Gastrocnemius medialis (tissue), 4 donors: ENCODE measurements at regions of chr5 and their contacts with region 1.

Region 1: GRCh38 chr5:176537608-176538504 is 654 bp upstream of the RNF44 start:
- DNase-seq: peak; percentile 100
- ATAC-seq: peak; percentile 85 to 87
- H3K4me3 ChIP-seq: peak overlapping the region; percentile 73 to 97 (median 90)
- H3K27ac ChIP-seq: peak overlapping the region; percentile 94 to 100 (median 97)
- H3K4me1 ChIP-seq: peaks cover 46 to 54% of the 10 kb centered on the region in 2 donors
- H3K27me3 ChIP-seq: no peaks in the 10 kb centered on the region
- CTCF ChIP-seq: peak in 1 of 5 experiments; percentile 8
- POLR2A ChIP-seq: peak in 1 of 2 donors; percentile 69

Region 2: DNA sequence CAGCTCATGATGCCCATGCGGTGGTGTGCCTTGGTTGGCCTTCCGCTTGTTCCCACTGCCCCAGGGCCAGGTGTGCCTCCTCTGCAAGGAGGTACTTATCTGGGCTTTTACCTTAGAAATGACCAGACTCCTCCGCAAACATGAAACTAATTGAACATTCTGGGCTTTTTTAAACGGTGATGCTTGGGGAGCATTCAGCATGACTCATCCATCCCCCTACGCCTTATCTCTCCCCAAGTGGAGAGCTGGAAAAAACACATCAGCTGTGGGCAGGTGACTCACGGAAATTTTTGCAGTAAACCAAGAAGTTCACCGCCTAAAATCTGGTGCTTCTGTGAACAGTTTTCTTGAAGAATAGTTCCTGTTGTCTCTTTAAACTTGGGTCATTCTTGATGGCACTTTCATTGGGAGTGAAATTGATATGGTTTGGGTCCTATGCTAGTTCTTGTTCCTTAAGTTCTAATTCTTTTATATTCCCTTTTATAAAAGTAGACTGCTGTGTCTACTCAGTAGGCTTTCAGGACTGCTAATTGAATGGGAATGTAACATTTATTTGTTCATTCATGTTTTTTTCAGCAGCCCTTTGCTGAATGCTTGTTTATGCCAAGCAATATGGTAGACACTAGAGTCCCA is 1019.9 kb before region 1 on chr5:
- in situ Hi-C with region 1: no loop called
- intact Hi-C with region 1: no loop called
- DNase-seq: no peak
- ATAC-seq: no peak
- H3K4me3 ChIP-seq: no peak overlapping the region
- H3K27ac ChIP-seq: no peak overlapping the region
- H3K4me1 ChIP-seq: no peaks in the 10 kb centered on the region
- H3K27me3 ChIP-seq: no peaks in the 10 kb centered on the region
- CTCF ChIP-seq: no peak
- POLR2A ChIP-seq: no peak

Region 3: DNA sequence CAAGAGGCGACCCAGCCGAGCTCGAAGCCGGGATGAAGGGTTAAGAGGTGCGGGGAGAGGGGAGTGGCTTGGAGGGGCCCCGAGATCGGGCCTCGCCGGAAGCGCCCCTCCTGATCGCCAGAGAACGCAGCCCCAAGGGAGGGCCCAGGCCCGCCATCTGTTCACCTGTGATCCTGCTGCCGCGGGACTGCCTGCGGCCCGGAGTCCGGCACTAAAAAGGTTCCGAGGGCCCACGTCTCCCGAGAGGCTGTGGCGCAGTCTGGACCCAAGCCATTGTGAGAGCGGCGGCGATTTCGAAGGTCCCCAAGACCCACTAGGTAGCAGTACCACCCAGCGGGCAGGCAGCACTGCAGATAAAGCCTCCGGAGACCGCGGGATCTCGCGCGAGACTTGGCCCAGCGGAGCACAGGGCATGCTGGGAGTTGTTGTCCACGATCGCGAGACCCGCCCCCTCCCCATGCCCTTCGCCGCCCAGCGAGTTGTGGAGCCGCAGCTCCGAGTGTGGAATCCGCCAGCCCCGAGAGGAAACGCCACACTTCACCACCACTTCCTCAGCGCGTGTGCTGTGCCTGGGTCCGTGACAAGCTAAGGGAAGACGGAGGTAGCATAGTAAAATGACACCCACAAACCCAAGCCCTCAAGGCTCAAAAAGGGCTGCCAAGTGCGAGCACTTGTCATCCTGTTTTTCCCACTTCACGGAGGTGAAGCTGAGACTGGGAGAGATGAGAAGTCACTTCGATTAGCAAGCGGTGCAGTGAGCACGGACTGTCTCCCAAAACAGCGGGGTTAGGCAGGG is 176.2 kb before region 1 on chr5 and contains the start of gene KIAA1191:
- in situ Hi-C with region 1: no loop called
- intact Hi-C with region 1: loop called (anchors 2 kb)
- DNase-seq: peak; percentile 94 to 96
- ATAC-seq: peak; percentile 85 to 87
- H3K4me3 ChIP-seq: peak within 1 kb of the TSS; percentile 83 to 99 (median 96)
- H3K27ac ChIP-seq: peak within 1 kb of the TSS; percentile 92 to 97 (median 94)
- H3K4me1 ChIP-seq: peaks cover 14 to 28% of the 10 kb centered on the region in 2 donors
- H3K27me3 ChIP-seq: no peaks in the 10 kb centered on the region
- CTCF ChIP-seq: peak in 2 of 5 experiments; percentile 34 to 51
- POLR2A ChIP-seq: peak; percentile 97 to 98
- total RNA-seq, gene KIAA1191: 76.3 to 174 (median 84.1) TPM

Region 4: GRCh38 chr5:176415952-176416924 is 121.6 kb before region 1 on chr5 and contains the start of gene CLTB:
- in situ Hi-C with region 1: loop called in 1 of 4 experiments (anchors 25 kb)
- intact Hi-C with region 1: loop called (anchors 1 kb)
- DNase-seq: peak; percentile 83 to 89
- ATAC-seq: peak; percentile 83 to 88
- H3K4me3 ChIP-seq: peak within 1 kb of the TSS; percentile 76 to 97 (median 92)
- H3K27ac ChIP-seq: peak within 1 kb of the TSS; percentile 88 to 99 (median 98)
- H3K4me1 ChIP-seq: peaks cover 39 to 41% of the 10 kb centered on the region in 2 donors
- H3K27me3 ChIP-seq: no peaks in the 10 kb centered on the region
- CTCF ChIP-seq: peak; percentile 53 to 93 (median 91)
- POLR2A ChIP-seq: peak; percentile 95 to 96
- total RNA-seq, gene CLTB: 261 to 386 (median 302) TPM

Region 5: GRCh38 chr5:176447982-176448608 is 89.8 kb before region 1 on chr5 and contains the start of gene FAF2:
- in situ Hi-C with region 1: loop called in 2 of 4 experiments (anchors 5 to 25 kb)
- intact Hi-C with region 1: loop called (anchors 1 kb)
- DNase-seq: peak; percentile 94 to 96
- ATAC-seq: peak; percentile 98 to 99
- H3K4me3 ChIP-seq: peak within 1 kb of the TSS; percentile 84 to 99 (median 94)
- H3K27ac ChIP-seq: peak within 1 kb of the TSS; percentile 91 to 97 (median 96)
- H3K4me1 ChIP-seq: peaks cover 36 to 39% of the 10 kb centered on the region in 2 donors
- H3K27me3 ChIP-seq: no peaks in the 10 kb centered on the region
- CTCF ChIP-seq: peak; percentile 87 to 99 (median 99)
- POLR2A ChIP-seq: peak; percentile 91 to 95
- total RNA-seq, gene FAF2: 14.0 to 20.7 (median 14.7) TPM

Region 6: DNA sequence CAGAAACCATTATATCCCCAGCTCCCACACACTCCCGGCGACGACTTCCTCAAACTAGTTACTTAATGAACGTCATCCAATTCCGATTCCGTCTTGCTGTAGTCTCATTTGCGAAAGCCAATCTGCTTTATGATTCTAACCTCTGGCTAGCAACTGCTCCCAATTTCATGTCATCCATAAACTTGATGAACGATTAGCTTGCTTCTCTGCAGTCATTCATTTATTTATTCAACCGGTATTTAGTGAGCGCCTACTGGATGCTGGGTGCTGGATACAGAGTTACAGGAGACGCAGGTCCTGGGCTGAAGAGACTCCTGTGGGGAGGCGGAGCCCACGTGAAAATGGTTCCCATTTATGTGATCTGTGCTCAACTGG is 155.6 kb after region 1 on chr5:
- in situ Hi-C with region 1: no loop called
- intact Hi-C with region 1: no loop called
- DNase-seq: no peak
- ATAC-seq: no peak
- H3K4me3 ChIP-seq: no peak overlapping the region
- H3K27ac ChIP-seq: no peak overlapping the region
- H3K4me1 ChIP-seq: no peaks in the 10 kb centered on the region
- H3K27me3 ChIP-seq: peaks cover 4 to 15% (median 10%) of the 10 kb centered on the region in 3 donors
- CTCF ChIP-seq: no peak
- POLR2A ChIP-seq: no peak

Region 7: DNA sequence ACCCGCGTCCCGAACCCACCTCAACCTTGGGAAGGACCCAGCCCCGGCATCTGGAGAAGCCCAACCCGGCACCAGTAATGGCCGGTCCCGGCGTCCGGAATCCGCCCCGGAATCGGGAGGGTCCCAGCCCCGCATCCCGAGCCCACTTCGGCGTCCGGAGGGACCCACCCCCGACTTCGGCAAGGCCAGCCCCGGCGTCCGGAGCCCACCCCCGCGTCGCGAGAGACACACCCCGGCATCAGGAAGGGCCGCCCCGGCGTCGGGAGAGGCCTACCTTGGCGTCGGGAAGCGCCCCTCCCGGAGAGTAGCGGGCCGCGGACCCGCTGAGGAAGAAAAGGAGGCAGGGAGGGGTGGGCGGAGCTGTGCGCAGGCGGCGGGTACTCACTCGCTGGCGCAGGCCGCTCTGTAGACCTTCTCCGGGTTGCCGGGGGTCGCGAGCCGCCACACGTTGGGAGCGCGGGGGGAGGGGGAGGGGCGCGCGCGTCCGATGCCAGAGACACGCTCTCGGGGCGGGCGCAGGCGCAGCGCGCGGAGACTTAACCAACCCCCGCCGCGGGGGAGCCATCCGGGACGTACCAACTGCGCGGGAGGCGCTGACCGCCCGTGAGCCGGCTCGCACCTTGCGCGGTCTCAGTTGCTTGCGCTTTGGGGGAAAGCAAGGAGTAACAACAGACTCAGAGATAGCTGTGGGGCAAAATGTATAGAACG is 468.6 kb after region 1 on chr5 and contains the start of gene UIMC1:
- in situ Hi-C with region 1: loop called in 2 of 4 experiments (anchors 10 to 25 kb)
- intact Hi-C with region 1: loop called (anchors 1 kb)
- DNase-seq: peak; percentile 80 to 85
- ATAC-seq: peak; percentile 90
- H3K4me3 ChIP-seq: peak within 1 kb of the TSS; percentile 68 to 84 (median 80)
- H3K27ac ChIP-seq: peak within 1 kb of the TSS; percentile 89 to 95 (median 92)
- H3K4me1 ChIP-seq: peaks cover 21 to 24% of the 10 kb centered on the region in 2 donors
- H3K27me3 ChIP-seq: no peaks in the 10 kb centered on the region
- CTCF ChIP-seq: peak in 1 of 5 experiments; percentile 9
- POLR2A ChIP-seq: peak; percentile 37 to 64
- total RNA-seq, gene UIMC1: 10.4 to 24.3 (median 20.2) TPM

Region 8: DNA sequence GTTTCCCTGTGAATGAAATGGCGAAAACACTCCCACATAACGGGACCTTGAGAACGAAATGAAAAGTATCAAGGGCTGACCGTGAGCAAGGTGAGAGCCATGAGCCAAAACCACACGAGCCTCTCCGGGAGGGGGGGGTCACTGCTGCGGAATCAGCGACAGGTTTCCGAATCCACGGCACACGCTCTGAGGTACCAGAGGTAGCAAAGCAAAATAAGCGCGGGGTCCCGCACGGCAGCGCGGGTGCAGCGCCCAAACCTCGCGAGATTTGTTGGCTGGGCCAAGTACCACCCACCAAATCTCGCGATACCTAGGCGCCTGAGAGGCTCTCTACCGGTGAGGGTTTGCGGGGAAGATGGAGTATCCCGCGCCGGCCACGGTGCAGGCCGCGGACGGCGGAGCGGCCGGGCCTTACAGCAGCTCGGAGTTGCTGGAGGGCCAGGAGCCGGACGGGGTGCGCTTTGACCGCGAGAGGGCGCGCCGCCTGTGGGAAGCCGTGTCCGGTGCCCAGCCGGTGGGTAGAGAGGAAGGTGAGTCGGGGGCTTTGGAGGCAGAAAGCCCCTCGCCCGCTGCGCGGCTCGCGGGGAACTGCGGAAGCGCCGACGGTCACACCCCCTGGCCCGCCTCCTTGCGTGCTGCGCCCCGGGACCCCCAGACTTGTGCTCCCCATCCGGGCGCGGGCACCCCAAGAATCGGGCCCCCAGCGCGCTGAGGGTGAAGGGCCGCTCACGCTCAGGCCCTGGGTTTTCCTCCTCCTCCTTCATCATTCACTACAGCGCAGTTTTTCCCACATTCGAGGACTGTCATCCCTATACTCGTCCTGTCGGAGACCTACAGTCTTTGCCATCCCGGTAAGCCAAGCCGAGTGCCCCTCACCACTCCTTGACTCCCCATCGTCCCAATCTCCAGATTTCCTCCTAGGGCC is 484.8 kb after region 1 on chr5 and contains the start of gene ZNF346:
- in situ Hi-C with region 1: loop called in 1 of 4 experiments (anchors 25 kb)
- intact Hi-C with region 1: no loop called
- DNase-seq: peak; percentile 85 to 88
- ATAC-seq: peak; percentile 91 to 92
- H3K4me3 ChIP-seq: peak within 1 kb of the TSS; percentile 67 to 98 (median 88)
- H3K27ac ChIP-seq: peak within 1 kb of the TSS; percentile 78 to 88 (median 86)
- H3K4me1 ChIP-seq: peaks cover 17 to 24% of the 10 kb centered on the region in 2 donors
- H3K27me3 ChIP-seq: no peaks in the 10 kb centered on the region
- CTCF ChIP-seq: peak; percentile 60 to 69 (median 66)
- POLR2A ChIP-seq: peak in 1 of 2 donors; percentile 57
- total RNA-seq, gene ZNF346: 5.2 to 8.0 (median 6.8) TPM

Region 9: GRCh38 chr5:177599731-177600507 is 1062.1 kb after region 1 on chr5 and contains the start of gene B4GALT7:
- in situ Hi-C with region 1: no loop called
- intact Hi-C with region 1: loop called (anchors 5 kb)
- DNase-seq: peak; percentile 61 to 74
- ATAC-seq: peak; percentile 81 to 94
- H3K4me3 ChIP-seq: peak within 1 kb of the TSS; percentile 81 to 99 (median 86)
- H3K27ac ChIP-seq: peak within 1 kb of the TSS; percentile 86 to 93 (median 92)
- H3K4me1 ChIP-seq: peaks cover 13 to 18% of the 10 kb centered on the region in 2 donors
- H3K27me3 ChIP-seq: no peaks in the 10 kb centered on the region
- CTCF ChIP-seq: peak in 2 of 5 experiments; percentile 16 to 24
- POLR2A ChIP-seq: peak; percentile 83 to 91
- total RNA-seq, gene B4GALT7: 11.9 to 24.8 (median 16.2) TPM